H1 (cell line): ENCODE measurements at regions of chr15 and their contacts with region 1.

Region 1: GRCh38 chr15:78638658-78639314 is 2.2 kb downstream of the CHRNB4 start:
- DNase-seq: peak; percentile 34 to 92
- H3K4me3 ChIP-seq: no peak overlapping the region
- H3K27ac ChIP-seq: no peak overlapping the region
- H3K4me1 ChIP-seq: peaks cover 2 to 16% (median 7%) of the 10 kb centered on the region in 4 experiments; a peak in 6 of 7 replicates
- H3K27me3 ChIP-seq: peaks cover 0 to 6% (median 4%) of the 10 kb centered on the region in 4 experiments; a peak in 2 of 7 replicates
- CTCF ChIP-seq: peak; percentile 72 to 90 (median 77)
- EP300 ChIP-seq: no peak
- POLR2A ChIP-seq: no peak
- RAD21 ChIP-seq: peak; percentile 92

Region 2: DNA sequence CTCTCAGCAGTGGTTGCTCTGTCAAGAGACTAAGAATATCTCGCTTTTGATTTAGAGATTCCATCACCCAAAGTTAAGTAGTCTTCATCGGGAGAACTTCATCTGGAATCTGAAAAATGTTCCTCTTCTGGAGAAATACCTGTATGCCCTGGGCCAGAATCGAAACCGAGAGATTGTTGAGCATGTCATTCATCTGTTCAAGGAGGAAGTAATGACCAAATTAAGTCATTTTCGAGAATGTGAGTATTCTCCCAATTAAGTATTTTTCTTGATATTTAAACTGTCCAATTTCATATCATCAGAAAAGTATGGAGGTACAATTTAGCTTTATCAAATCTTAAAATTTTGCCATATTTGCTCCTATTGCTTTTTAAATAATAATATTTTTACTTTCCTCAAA is 111.5 kb before region 1 on chr15:
- CTCF ChIA-PET with region 1: no interaction called
- POLR2A ChIA-PET with region 1: no interaction called
- DNase-seq: no peak
- H3K4me3 ChIP-seq: no peak overlapping the region
- H3K27ac ChIP-seq: no peak overlapping the region
- H3K4me1 ChIP-seq: no peaks in the 10 kb centered on the region
- H3K27me3 ChIP-seq: no peaks in the 10 kb centered on the region
- CTCF ChIP-seq: no peak
- EP300 ChIP-seq: no peak
- POLR2A ChIP-seq: no peak
- RAD21 ChIP-seq: no peak

Region 3: GRCh38 chr15:78596514-78596913 is 42.3 kb before region 1 on chr15:
- CTCF ChIA-PET with region 1: no interaction called
- POLR2A ChIA-PET with region 1: no interaction called
- DNase-seq: no peak
- H3K4me3 ChIP-seq: no peak overlapping the region
- H3K27ac ChIP-seq: no peak overlapping the region
- H3K4me1 ChIP-seq: no peaks in the 10 kb centered on the region
- H3K27me3 ChIP-seq: no peaks in the 10 kb centered on the region
- CTCF ChIP-seq: no peak
- EP300 ChIP-seq: no peak
- POLR2A ChIP-seq: no peak
- RAD21 ChIP-seq: no peak

Region 4: DNA sequence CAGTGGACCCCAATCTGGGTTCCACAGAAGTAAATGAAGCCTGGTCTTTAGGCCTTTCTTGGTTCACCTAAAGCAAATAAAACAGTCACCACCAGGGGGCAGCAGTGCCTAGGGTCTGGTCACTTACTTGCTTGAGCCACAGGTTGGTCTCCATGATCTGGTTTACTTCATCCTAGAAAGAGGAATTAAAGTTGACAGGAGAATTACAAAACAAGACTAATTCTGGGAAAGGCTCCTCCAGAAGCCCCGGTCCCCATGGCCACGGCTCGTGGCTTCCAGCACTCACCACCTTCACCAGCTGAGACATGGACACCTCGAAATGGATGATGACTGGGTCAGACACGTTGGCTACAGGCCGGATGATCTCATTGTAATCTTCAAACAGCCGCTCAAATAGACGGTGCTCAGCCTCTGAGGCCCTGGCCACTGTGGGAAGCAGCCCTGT is 20.3 kb before region 1 on chr15:
- CTCF ChIA-PET with region 1: interaction called, 49 read pairs
- POLR2A ChIA-PET with region 1: no interaction called
- DNase-seq: peak; percentile 72 to 98
- H3K4me3 ChIP-seq: no peak overlapping the region
- H3K27ac ChIP-seq: no peak overlapping the region
- H3K4me1 ChIP-seq: peaks cover 0 to 10% (median 2%) of the 10 kb centered on the region in 4 experiments; a peak in 6 of 7 replicates
- H3K27me3 ChIP-seq: peaks cover 6 to 39% (median 35%) of the 10 kb centered on the region in 4 experiments
- CTCF ChIP-seq: peak; percentile 60 to 92 (median 82)
- EP300 ChIP-seq: no peak
- POLR2A ChIP-seq: no peak
- RAD21 ChIP-seq: peak; percentile 89 to 92

Region 5: GRCh38 chr15:78654272-78654671 is 15.5 kb after region 1 on chr15:
- CTCF ChIA-PET with region 1: interaction called, 44 read pairs
- POLR2A ChIA-PET with region 1: interaction called, 7 read pairs
- DNase-seq: no peak
- H3K4me3 ChIP-seq: no peak overlapping the region
- H3K27ac ChIP-seq: no peak overlapping the region
- H3K4me1 ChIP-seq: no peaks in the 10 kb centered on the region
- H3K27me3 ChIP-seq: no peaks in the 10 kb centered on the region
- CTCF ChIP-seq: no peak
- EP300 ChIP-seq: no peak
- POLR2A ChIP-seq: no peak
- RAD21 ChIP-seq: no peak

Region 6: DNA sequence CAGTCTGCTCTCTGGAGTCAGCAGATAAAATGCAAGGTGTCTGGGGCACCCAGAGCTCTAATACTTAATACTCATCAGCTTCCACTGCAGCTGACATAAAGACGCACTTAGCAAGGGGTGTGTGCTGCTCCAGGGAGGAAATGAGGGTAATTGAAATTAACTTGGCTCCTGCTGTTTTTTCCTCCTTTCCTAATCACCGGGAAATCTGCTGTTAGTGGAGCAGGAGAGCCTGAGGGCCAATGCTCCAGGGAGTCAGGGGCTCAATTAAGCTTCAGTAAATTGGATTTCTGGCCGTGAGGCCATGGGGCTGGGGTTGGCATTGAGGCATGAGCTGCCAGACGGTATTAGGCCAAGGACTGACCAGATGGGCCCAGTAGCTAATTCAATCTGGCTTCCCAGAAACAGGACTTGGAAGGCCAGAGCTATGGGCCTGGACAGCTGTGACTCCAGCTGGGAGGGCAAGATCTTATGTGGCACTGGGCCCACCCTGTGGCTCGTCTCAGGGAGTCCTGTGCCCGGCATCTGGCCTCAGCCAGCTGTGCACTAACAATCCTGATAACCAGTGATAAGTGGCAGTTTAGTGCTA is 32.9 kb after region 1 on chr15:
- CTCF ChIA-PET with region 1: interaction called, 23 read pairs
- POLR2A ChIA-PET with region 1: no interaction called
- DNase-seq: peak; percentile 49 to 60
- H3K4me3 ChIP-seq: no peak overlapping the region
- H3K27ac ChIP-seq: no peak overlapping the region
- H3K4me1 ChIP-seq: peaks cover 7 to 24% (median 16%) of the 10 kb centered on the region in 4 experiments
- H3K27me3 ChIP-seq: peaks cover 0 to 6% (median 4%) of the 10 kb centered on the region in 4 experiments; a peak in 3 of 7 replicates
- CTCF ChIP-seq: no peak
- EP300 ChIP-seq: no peak
- POLR2A ChIP-seq: no peak
- RAD21 ChIP-seq: no peak

Region 7: GRCh38 chr15:78695854-78696253 is 57.1 kb after region 1 on chr15:
- CTCF ChIA-PET with region 1: interaction called, 256 read pairs
- POLR2A ChIA-PET with region 1: interaction called, 4 read pairs
- DNase-seq: no peak
- H3K4me3 ChIP-seq: no peak overlapping the region
- H3K27ac ChIP-seq: no peak overlapping the region
- H3K4me1 ChIP-seq: peaks cover 0 to 7% (median 3%) of the 10 kb centered on the region in 4 experiments; a peak in 4 of 7 replicates
- H3K27me3 ChIP-seq: no peaks in the 10 kb centered on the region
- CTCF ChIP-seq: peak in 2 of 3 experiments; percentile 19 to 34; a peak in 2 of 4 replicates
- EP300 ChIP-seq: no peak
- POLR2A ChIP-seq: no peak
- RAD21 ChIP-seq: 0 out of 4 replicates have a peak, but pooled peaks of 1 of the 2 experiments have one; percentile 7

Region 8: DNA sequence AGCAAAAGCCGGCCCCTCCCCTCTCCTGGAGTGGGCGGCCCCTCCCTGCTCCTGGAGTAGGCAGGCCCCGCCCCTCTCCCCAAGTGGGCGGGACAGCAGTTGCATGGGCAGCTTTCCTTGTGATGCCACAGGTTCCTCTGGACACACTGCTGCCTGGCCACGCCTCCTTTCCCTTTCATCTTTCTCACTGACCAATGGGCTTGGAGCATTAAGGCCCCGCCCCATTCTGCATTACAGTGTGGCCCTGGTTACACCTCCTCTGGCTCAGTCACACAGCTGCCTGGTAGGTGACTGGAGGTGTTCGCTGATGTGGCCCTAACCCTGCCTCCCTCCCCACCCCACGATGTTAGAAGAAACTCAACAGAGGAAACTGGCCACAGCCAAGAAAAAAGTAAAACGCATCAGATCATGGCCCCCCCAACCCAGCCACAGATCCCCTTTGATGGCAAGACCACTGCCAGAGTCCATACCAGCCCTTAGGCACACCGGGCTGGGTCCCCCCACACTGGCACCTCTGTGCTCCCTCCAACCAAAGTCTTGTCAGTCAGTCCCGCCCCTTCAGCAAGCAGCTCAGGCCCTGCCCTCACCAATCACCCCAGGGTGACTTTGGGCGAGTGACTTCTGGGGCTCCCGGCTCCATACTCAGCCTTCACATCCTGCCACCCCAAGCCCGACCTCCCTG is 88.2 kb after region 1 on chr15:
- CTCF ChIA-PET with region 1: interaction called, 28 read pairs
- POLR2A ChIA-PET with region 1: interaction called, 4 read pairs
- DNase-seq: peak in 1 of 2 experiments; percentile 88
- H3K4me3 ChIP-seq: no peak overlapping the region
- H3K27ac ChIP-seq: no peak overlapping the region; the same call in 1 of the 2 replicates
- H3K4me1 ChIP-seq: peaks cover 0 to 6% (median 3%) of the 10 kb centered on the region in 4 experiments; a peak in 3 of 7 replicates
- H3K27me3 ChIP-seq: no peaks in the 10 kb centered on the region
- CTCF ChIP-seq: no peak
- EP300 ChIP-seq: no peak
- POLR2A ChIP-seq: peak in 1 of 2 experiments; percentile 44; a peak in 1 of 3 replicates
- RAD21 ChIP-seq: no peak

Region 9: GRCh38 chr15:78739996-78740903 is 101.5 kb after region 1 on chr15:
- CTCF ChIA-PET with region 1: interaction called, 68 read pairs
- POLR2A ChIA-PET with region 1: no interaction called
- DNase-seq: peak in 1 of 2 experiments; percentile 96
- H3K4me3 ChIP-seq: no peak overlapping the region
- H3K27ac ChIP-seq: no peak overlapping the region
- H3K4me1 ChIP-seq: peaks cover 0 to 7% (median 3%) of the 10 kb centered on the region in 4 experiments; a peak in 4 of 7 replicates
- H3K27me3 ChIP-seq: no peaks in the 10 kb centered on the region
- CTCF ChIP-seq: peak; percentile 76 to 88 (median 79)
- EP300 ChIP-seq: no peak
- POLR2A ChIP-seq: no peak
- RAD21 ChIP-seq: peak; percentile 49 to 53